Heart right ventricle (tissue), 16 donors: ENCODE measurements at regions of chr1 and their contacts with region 1.

Region 1: DNA sequence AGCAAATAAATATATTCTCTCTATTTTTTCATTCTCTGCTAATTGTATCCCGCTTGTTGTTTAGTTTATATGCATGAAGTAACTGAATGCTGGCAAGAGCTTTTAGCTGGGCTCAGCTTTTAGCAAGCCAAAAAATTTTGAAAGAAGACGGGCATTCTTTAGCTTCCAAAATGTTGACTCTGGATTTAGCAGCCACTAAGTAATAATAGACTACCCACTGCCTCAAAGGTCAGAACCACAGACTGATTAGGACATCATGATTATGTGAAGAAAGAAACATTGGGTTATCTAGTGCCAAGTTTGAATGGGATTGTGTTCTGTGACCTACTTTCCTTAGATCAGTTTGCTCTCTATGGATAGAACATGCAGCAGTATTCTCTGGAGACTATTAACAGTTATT is 80.3 kb upstream of the DPH5 start:
- DNase-seq: no peak
- ATAC-seq: peak in 6 of 8 donors; percentile 23 to 87 (median 75)
- H3K4me3 ChIP-seq: no peak overlapping the region
- H3K27ac ChIP-seq: no peak overlapping the region
- H3K4me1 ChIP-seq: peaks cover 0 to 33% (median 20%) of the 10 kb centered on the region in 9 donors
- H3K27me3 ChIP-seq: no peaks in the 10 kb centered on the region
- CTCF ChIP-seq: no peak

Region 2: GRCh38 chr1:100134872-100135271 is 971.0 kb before region 1 on chr1:
- intact Hi-C with region 1: no loop called
- DNase-seq: no peak
- ATAC-seq: no peak
- H3K4me3 ChIP-seq: no peak overlapping the region
- H3K27ac ChIP-seq: no peak overlapping the region
- H3K4me1 ChIP-seq: peaks cover 5 to 41% (median 27%) of the 10 kb centered on the region in 9 donors
- H3K27me3 ChIP-seq: no peaks in the 10 kb centered on the region
- CTCF ChIP-seq: no peak

Region 3: DNA sequence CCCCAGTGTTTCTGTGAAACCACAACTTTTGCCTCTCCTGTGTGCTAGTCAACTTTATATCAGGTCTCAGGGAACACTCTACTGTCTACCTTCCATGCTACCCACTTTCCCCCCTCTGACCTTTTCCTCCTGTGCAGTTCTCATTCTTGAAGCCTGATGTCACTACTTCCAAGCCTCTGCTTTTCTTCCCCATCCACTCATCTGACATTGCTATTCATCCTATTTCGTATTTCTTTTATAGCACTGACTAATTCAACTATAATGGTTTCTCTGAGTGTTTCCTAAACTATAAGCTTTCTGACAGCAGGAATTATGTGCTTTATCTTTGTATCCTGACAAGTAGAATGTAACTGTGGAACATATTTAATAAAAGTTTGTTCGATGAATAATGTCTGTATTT is 62.1 kb before region 1 on chr1:
- intact Hi-C with region 1: loop called in 1 of 10 experiments (anchors 10 kb)
- DNase-seq: no peak
- ATAC-seq: peak in 6 of 8 donors; percentile 50 to 85 (median 72)
- H3K4me3 ChIP-seq: no peak overlapping the region
- H3K27ac ChIP-seq: no peak overlapping the region
- H3K4me1 ChIP-seq: peaks cover 0 to 13% (median 0%) of the 10 kb centered on the region in 9 donors
- H3K27me3 ChIP-seq: no peaks in the 10 kb centered on the region
- CTCF ChIP-seq: peak in 7 of 9 donors; percentile 8 to 54 (median 27)